Activated CD4-positive, alpha-beta memory T cell treated with anti-CD3 and anti-CD28 coated beads, Interleukin-2, amount 10 ng/mL, durations not matched to agents 7 days and 5 days (primary cell): ENCODE measurements at regions of chr6 and their contacts with region 1.

Region 1: GRCh38 chr6:108558372-108559096 is 2.2 kb upstream of the FOXO3 start:
- DNase-seq: peak; percentile 97
- H3K4me3 Mint-ChIP-seq: peak overlapping the region; percentile 97
- H3K27ac Mint-ChIP-seq: peak overlapping the region; percentile 98
- H3K4me1 Mint-ChIP-seq: peaks cover 28% of the 10 kb centered on the region
- H3K27me3 Mint-ChIP-seq: peaks cover 21% of the 10 kb centered on the region

Region 2: GRCh38 chr6:108484016-108484415 is 74.5 kb before region 1 on chr6:
- CTCF ChIA-PET with region 1: no interaction called
- POLR2A ChIA-PET with region 1: no interaction called
- DNase-seq: no peak
- H3K4me3 Mint-ChIP-seq: no peak overlapping the region
- H3K27ac Mint-ChIP-seq: no peak overlapping the region
- H3K4me1 Mint-ChIP-seq: no peaks in the 10 kb centered on the region
- H3K27me3 Mint-ChIP-seq: no peaks in the 10 kb centered on the region

Region 3: GRCh38 chr6:108541838-108542759 is 16.4 kb before region 1 on chr6:
- CTCF ChIA-PET with region 1: interaction called, 6 read pairs
- POLR2A ChIA-PET with region 1: interaction called, 12 read pairs
- DNase-seq: peak; percentile 78
- H3K4me3 Mint-ChIP-seq: peak overlapping the region; percentile 40
- H3K27ac Mint-ChIP-seq: no peak overlapping the region
- H3K4me1 Mint-ChIP-seq: peaks cover 23% of the 10 kb centered on the region
- H3K27me3 Mint-ChIP-seq: peaks cover 18% of the 10 kb centered on the region

Region 4: DNA sequence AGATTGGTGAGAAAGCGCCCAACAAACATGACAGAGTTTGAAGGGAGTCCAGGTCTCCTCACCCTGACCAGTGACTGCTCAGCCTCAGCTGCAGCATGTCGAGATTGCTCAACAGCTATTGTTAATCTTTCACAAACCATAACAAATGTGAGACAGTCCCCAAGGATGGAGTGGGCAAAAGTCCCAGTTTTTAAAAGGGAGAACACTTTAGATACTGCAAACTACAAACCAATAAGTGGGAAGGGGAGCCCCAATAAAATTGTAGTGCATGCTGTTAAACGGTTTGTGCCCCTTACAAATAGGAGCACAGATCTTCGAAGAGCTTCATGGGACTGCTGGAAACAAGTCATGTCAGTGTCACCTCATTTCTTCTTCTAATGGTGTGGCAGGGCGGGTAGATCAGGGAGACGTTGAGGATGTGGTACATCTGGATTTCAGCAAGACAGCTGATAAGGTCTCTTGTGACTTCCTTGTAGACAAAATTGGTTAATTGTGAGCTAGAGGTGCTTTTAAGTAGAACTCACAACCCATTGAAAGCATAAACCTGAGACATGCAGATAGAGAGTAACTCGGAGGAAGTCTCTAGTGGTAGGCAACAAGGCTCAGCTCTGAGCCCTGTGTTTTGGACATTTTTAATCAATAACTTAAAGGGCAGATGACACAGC is 155.7 kb after region 1 on chr6:
- CTCF ChIA-PET with region 1: no interaction called
- POLR2A ChIA-PET with region 1: interaction called, 10 read pairs
- DNase-seq: peak; percentile 51
- H3K4me3 Mint-ChIP-seq: peak overlapping the region; percentile 8
- H3K27ac Mint-ChIP-seq: peak overlapping the region; percentile 78
- H3K4me1 Mint-ChIP-seq: peaks cover 34% of the 10 kb centered on the region
- H3K27me3 Mint-ChIP-seq: no peaks in the 10 kb centered on the region

Region 5: GRCh38 chr6:108874470-108875160 is 316.1 kb after region 1 on chr6:
- CTCF ChIA-PET with region 1: interaction called, 3 read pairs
- POLR2A ChIA-PET with region 1: interaction called, 19 read pairs
- DNase-seq: peak; percentile 75
- H3K4me3 Mint-ChIP-seq: peak overlapping the region; percentile 75
- H3K27ac Mint-ChIP-seq: peak overlapping the region; percentile 100
- H3K4me1 Mint-ChIP-seq: peaks cover 74% of the 10 kb centered on the region
- H3K27me3 Mint-ChIP-seq: peaks cover 8% of the 10 kb centered on the region

Region 6: GRCh38 chr6:109382576-109383437 is 824.3 kb after region 1 on chr6:
- CTCF ChIA-PET with region 1: no interaction called
- POLR2A ChIA-PET with region 1: interaction called, 13 read pairs
- DNase-seq: peak; percentile 94
- H3K4me3 Mint-ChIP-seq: peak overlapping the region; percentile 93
- H3K27ac Mint-ChIP-seq: peak overlapping the region; percentile 99
- H3K4me1 Mint-ChIP-seq: peaks cover 28% of the 10 kb centered on the region
- H3K27me3 Mint-ChIP-seq: peaks cover 3% of the 10 kb centered on the region